ENCODE measurements at regions of chr19 and their contacts with region 1.

Region 1: DNA sequence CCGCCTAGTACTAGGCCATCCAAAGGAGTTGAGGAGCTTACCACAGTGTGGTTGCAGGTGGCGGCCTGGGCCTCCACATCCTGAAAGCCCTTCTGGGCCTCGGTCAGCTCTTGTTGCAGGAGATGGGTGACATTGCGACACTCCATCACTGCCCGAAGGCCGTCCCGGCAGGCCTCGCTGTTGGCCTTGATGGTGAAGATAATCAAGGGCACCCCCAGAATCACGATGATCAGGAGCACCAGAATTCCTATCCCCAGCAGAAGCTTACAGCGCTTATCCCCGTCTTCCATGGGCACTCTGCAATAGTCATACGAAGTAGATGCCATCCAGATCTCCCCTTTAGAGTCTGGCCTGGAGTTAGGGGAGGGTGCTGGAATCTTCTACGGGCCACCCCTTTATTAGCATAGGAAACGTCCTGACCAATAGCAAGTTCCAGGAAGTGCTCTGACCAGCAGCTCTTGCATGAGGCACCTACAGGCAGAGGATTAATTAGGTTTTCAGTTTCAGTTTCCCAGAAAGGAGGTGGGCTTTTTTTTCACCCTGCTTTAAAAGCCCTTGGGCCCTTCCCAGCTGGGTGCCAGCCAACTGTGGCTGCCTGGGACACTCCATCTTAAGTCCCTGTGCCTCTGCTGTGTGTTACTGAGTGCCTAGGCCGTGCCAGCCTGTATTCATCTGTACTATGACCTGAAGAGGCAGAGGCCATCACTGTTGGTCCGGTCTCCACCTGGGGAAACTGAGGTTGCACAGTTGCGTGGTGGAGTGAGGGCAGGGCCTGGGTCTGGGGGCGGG is at the start of gene BST2:
- DNase-seq: peak; percentile 72
- ATAC-seq: peak; percentile 77
- H3K4me3 Mint-ChIP-seq: peak within 1 kb of the TSS; percentile 95
- H3K27ac Mint-ChIP-seq: peak within 1 kb of the TSS; percentile 97
- H3K4me1 Mint-ChIP-seq: peaks cover 29% of the 10 kb centered on the region
- H3K27me3 Mint-ChIP-seq: no peaks in the 10 kb centered on the region
- CTCF ChIP-seq: no peak
- total RNA-seq, gene BST2: 89.7 to 98.4 TPM

Region 2: GRCh38 chr19:17419621-17420466 is 14.4 kb after region 1 on chr19 and contains the start of gene MVB12A:
- CTCF ChIA-PET with region 1: interaction called, 4 read pairs
- POLR2A ChIA-PET with region 1: interaction called, 22 read pairs
- intact Hi-C with region 1: no loop called
- DNase-seq: peak; percentile 97
- ATAC-seq: peak; percentile 97
- H3K4me3 Mint-ChIP-seq: peak within 1 kb of the TSS; percentile 91
- H3K27ac Mint-ChIP-seq: peak within 1 kb of the TSS; percentile 90
- H3K4me1 Mint-ChIP-seq: peaks cover 13% of the 10 kb centered on the region
- H3K27me3 Mint-ChIP-seq: no peaks in the 10 kb centered on the region
- CTCF ChIP-seq: no peak
- total RNA-seq, gene MVB12A: 28.1 to 31.8 TPM

Region 3: GRCh38 chr19:17450264-17451075 is 45.0 kb after region 1 on chr19:
- CTCF ChIA-PET with region 1: no interaction called
- POLR2A ChIA-PET with region 1: interaction called, 5 read pairs
- intact Hi-C with region 1: loop called (anchors 10 kb)
- DNase-seq: peak; percentile 73
- ATAC-seq: peak; percentile 82
- H3K4me3 Mint-ChIP-seq: no peak overlapping the region
- H3K27ac Mint-ChIP-seq: no peak overlapping the region
- H3K4me1 Mint-ChIP-seq: peaks cover 21% of the 10 kb centered on the region
- H3K27me3 Mint-ChIP-seq: peaks cover 29% of the 10 kb centered on the region
- CTCF ChIP-seq: no peak